ENCODE measurements at regions of chr12 and their contacts with region 1.

Region 1: DNA sequence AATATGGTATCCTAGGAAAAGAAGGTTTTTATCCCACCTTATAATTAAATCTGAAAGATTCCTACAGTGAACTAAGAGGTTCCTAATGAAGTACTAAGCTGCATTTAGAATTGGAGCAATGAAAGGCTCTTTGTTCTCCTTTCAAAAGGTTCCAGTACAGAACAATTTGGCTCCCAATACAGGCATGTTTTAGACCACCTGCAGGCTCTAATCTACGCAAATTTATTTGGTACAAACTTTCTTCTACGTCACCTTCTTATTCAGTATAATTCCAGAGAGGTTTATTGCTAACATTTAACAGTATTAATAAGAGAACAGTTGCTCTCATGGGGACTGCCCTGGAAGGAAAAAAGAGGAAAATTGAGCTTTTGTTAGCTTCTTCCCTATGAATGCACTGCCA is 37.6 kb upstream of the SLCO1C1 start:
- DNase-seq: no peak
- H3K4me3 ChIP-seq: no peak overlapping the region
- H3K27ac ChIP-seq: no peak overlapping the region
- H3K4me1 ChIP-seq: no peaks in the 10 kb centered on the region
- H3K27me3 ChIP-seq: no peaks in the 10 kb centered on the region
- CTCF ChIP-seq: no peak

Region 2: GRCh38 chr12:20701093-20701492 is 43.6 kb after region 1 on chr12:
- intact Hi-C with region 1: loop called (anchors 10 kb)
- DNase-seq: no peak
- H3K4me3 ChIP-seq: no peak overlapping the region
- H3K27ac ChIP-seq: no peak overlapping the region
- H3K4me1 ChIP-seq: no peaks in the 10 kb centered on the region
- H3K27me3 ChIP-seq: no peaks in the 10 kb centered on the region
- CTCF ChIP-seq: no peak

Measured in colonic mucosa (tissue), 4 donors.